Activated T-helper 2 cell treated with anti-CD3 and anti-CD28 coated beads, Interferon-gamma antibody, Interleukin-2, Interleukin-4, amounts not matched to agents 10 μg/mL and 5 μg/mL and 100 μg/mL, durations not matched to agents 14 hours and 24 hours and 36 hours (primary cell): ENCODE measurements at regions of chr6 and their contacts with region 1.

Region 1: DNA sequence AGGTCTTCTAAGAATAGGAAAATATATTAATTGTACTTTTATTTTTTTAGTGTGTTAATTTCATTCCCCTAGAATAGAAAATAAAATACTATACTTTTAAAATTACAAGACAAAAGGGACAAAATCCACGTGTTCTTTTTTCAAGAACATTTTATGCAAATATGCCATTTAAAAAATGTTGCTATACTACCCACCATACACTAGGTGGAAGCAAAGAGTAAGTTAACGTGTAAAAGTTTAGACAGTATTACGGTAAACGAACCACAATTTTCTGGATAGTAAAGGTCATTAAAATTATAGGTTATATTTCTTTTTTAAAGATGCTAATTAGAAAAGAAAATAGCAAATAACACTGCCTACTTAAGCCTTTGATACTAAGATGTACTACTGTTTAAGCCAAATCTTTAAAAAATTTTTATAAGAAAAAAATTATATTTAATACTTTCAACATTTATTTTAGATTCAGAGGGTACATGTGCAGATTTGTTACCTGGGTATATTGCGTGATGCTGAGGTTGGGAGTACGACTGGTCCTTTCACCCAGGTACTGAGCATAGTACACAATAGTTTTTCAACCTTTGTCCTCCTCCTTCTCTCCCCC is 287.6 kb downstream of the PHF3 start:
- DNase-seq: no peak
- H3K4me3 Mint-ChIP-seq: no peak overlapping the region
- H3K27ac Mint-ChIP-seq: no peak overlapping the region
- H3K4me1 Mint-ChIP-seq: no peaks in the 10 kb centered on the region
- H3K27me3 Mint-ChIP-seq: no peaks in the 10 kb centered on the region

Region 2: DNA sequence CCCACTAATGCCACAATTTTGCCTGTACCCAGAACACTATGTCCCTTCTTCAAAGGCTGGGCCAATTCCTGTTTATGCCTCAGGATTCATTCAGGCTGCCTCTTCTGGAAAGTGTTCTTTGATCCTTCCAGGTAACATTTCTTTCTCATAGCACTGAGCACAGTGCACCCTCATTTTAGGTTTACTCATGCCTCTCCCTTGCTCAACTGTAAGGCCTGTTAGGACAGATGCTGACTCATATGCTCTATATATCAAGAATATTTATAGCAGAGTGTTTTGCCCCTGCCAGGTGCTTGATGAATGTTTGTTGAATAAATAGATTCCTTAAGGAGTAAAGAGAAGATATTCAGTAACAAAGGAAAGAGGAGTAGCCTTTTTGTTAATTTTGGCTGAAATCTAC is 23.7 kb before region 1 on chr6:
- intact Hi-C with region 1: no loop called
- DNase-seq: no peak
- H3K4me3 Mint-ChIP-seq: no peak overlapping the region
- H3K27ac Mint-ChIP-seq: no peak overlapping the region
- H3K4me1 Mint-ChIP-seq: no peaks in the 10 kb centered on the region
- H3K27me3 Mint-ChIP-seq: no peaks in the 10 kb centered on the region

Region 3: GRCh38 chr6:64330694-64331307 is 407.6 kb after region 1 on chr6:
- intact Hi-C with region 1: loop called (anchors 2 kb)
- DNase-seq: peak; percentile 9
- H3K4me3 Mint-ChIP-seq: no peak overlapping the region
- H3K27ac Mint-ChIP-seq: no peak overlapping the region
- H3K4me1 Mint-ChIP-seq: no peaks in the 10 kb centered on the region
- H3K27me3 Mint-ChIP-seq: no peaks in the 10 kb centered on the region